A673 (cell line): ENCODE measurements at regions of chr19 and their contacts with region 1.

Region 1: GRCh38 chr19:50461066-50461875 is 15.0 kb upstream of the EMC10 start:
- DNase-seq: peak; percentile 75
- H3K4me3 ChIP-seq: no peak overlapping the region
- H3K27ac ChIP-seq: no peak overlapping the region
- H3K4me1 ChIP-seq: peaks cover 5% of the 10 kb centered on the region
- H3K27me3 ChIP-seq: peaks cover 4% of the 10 kb centered on the region
- CTCF ChIP-seq: peak; percentile 86

Region 2: GRCh38 chr19:50357178-50358100 is 103.8 kb before region 1 on chr19:
- CTCF ChIA-PET with region 1: interaction called, 5 read pairs
- POLR2A ChIA-PET with region 1: no interaction called
- intact Hi-C with region 1: loop called (anchors 2 kb)
- DNase-seq: peak; percentile 89
- H3K4me3 ChIP-seq: peak overlapping the region; percentile 65
- H3K27ac ChIP-seq: peak overlapping the region; percentile 85
- H3K4me1 ChIP-seq: no peaks in the 10 kb centered on the region
- H3K27me3 ChIP-seq: no peaks in the 10 kb centered on the region
- CTCF ChIP-seq: peak; percentile 87

Region 3: DNA sequence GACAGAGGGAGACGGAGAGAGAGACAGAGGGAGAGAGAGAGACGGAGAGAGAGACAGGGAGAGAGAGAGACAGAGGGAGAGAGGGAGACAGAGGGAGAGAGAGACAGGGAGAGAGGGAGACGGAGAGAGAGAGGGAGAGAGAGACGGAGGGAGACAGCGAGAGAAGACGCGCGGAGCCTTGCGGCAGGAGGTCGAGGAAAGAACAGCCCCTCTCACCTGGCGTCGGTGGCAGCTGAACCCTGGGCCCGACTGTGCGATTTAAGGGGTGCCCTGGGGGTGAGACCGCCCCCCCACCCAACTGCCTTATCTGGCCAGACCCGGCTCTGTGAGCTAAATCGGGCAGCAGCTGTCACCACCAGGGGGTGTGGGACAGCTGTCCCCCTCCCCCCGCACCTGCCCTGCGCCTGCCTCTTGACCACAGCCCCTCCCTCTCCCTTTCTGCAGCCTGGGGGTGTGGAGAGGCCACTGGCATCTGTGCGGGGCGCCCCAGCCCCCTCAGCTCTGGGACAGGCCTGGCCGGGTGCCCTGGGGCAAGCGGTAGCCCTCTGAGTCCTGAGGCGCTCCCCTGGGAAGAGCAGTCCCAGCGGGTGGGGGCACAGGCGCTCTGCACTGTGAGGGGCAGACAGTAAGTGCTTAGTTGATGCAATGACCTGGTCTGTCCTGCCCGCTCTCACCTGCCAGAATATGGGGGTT is 38.9 kb after region 1 on chr19:
- CTCF ChIA-PET with region 1: no interaction called
- POLR2A ChIA-PET with region 1: no interaction called
- intact Hi-C with region 1: no loop called
- DNase-seq: no peak
- H3K4me3 ChIP-seq: no peak overlapping the region
- H3K27ac ChIP-seq: no peak overlapping the region
- H3K4me1 ChIP-seq: no peaks in the 10 kb centered on the region
- H3K27me3 ChIP-seq: peaks cover 29% of the 10 kb centered on the region
- CTCF ChIP-seq: no peak; the same call in 1 of the 2 replicates

Region 4: DNA sequence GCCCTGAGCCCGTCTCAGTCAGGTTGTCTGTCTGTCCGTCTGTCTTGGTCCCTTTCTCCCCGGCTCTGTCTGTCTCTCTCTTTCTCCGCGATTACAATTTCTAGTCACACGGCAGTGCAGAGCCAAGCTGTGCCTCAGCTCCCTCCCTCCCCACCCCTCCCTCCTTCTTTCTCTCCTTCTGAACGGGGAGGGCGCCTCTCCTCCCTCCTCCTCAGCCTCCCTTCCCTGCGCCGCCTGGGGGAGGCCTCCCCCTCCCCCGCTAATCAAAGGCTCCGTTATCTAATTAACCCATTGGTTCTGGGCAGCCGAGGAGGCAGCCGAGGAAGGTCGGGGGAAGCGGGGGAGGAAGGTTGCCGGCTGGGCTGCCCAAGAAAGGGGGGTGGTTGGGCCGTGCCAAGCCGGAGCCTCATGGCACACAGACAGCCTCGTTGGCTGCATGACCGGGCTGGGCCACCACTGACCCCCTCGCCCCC is 90.5 kb after region 1 on chr19:
- CTCF ChIA-PET with region 1: no interaction called
- POLR2A ChIA-PET with region 1: no interaction called
- intact Hi-C with region 1: no loop called
- DNase-seq: peak; percentile 37
- H3K4me3 ChIP-seq: no peak overlapping the region
- H3K27ac ChIP-seq: no peak overlapping the region
- H3K4me1 ChIP-seq: peaks cover 4% of the 10 kb centered on the region
- H3K27me3 ChIP-seq: no peaks in the 10 kb centered on the region
- CTCF ChIP-seq: no peak